ENCODE measurements at regions of chr7 and their contacts with region 1.

Region 1: DNA sequence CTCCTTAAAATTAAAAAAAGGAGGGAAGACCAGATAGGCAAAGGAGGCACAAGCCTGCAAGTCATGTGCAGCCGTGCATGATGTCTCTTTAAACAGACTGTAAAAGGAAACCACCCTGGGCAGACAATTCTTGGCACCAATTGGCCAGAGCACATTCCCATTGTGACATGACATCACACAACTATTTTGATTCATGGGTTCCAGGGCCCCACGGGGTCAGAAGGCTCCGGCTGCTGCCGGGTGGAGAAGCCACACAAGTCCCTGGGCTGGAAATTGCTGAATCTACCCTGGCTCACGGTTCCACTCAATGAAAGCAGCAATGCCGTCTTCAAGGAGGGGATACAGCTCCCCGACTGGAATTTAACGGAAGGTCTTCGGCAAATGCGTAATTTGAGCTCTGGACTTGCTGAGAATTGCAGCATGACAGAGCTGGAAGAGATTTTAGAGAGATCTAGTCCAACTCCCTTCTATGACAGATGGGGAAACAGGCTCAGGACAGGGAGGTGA is 140.5 kb downstream of the PRKAG2 start:
- DNase-seq: peak; percentile 79 to 85
- H3K4me3 ChIP-seq: peak overlapping the region in 2 of 3 donors; percentile 9 to 49
- H3K27ac ChIP-seq: peak overlapping the region; percentile 30 to 46
- H3K4me1 ChIP-seq: no peaks in the 10 kb centered on the region
- H3K27me3 ChIP-seq: no peaks in the 10 kb centered on the region
- CTCF ChIP-seq: peak in 1 of 3 donors; percentile 27
- POLR2A ChIP-seq: no peak

Region 2: DNA sequence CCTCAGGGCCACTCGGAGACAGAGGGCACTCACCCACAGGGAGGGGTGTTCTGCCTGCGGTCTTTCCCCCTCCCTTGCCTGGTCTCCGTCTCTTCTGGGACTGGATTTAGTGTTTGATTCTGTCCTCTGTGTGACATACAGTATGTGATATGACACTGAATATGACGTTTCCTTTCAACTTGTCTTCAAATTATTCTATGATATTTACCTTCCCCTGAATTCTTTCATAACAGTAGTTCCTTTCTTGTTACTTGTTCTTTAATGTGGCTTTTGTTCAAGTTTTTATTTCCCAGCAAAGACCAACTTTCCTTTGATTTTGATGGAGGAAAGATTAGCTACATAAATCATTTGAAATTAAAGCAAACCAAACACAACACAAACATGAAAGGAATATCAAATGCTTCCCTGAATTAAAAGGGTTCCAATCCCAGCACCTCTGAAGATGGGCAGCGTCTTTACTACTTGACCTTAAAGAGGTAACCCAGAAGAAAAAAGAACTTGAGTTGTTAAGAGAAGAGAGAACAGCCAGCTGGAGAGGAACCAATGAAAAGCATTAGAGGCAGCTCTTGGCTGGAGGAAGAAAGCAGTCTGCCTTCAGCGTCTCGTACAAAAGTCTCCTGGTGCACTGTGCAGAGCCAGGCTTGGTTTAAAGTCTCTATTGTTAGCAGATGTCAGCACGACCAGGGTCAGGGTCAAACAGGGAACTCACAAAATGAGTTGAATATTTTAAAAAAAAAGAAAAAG is 198.5 kb before region 1 on chr7:
- intact Hi-C with region 1: no loop called
- DNase-seq: peak in 1 of 2 donors; percentile 41
- H3K4me3 ChIP-seq: no peak overlapping the region
- H3K27ac ChIP-seq: peak overlapping the region; percentile 54 to 70
- H3K4me1 ChIP-seq: no peaks in the 10 kb centered on the region
- H3K27me3 ChIP-seq: no peaks in the 10 kb centered on the region
- CTCF ChIP-seq: no peak
- POLR2A ChIP-seq: no peak

Region 3: DNA sequence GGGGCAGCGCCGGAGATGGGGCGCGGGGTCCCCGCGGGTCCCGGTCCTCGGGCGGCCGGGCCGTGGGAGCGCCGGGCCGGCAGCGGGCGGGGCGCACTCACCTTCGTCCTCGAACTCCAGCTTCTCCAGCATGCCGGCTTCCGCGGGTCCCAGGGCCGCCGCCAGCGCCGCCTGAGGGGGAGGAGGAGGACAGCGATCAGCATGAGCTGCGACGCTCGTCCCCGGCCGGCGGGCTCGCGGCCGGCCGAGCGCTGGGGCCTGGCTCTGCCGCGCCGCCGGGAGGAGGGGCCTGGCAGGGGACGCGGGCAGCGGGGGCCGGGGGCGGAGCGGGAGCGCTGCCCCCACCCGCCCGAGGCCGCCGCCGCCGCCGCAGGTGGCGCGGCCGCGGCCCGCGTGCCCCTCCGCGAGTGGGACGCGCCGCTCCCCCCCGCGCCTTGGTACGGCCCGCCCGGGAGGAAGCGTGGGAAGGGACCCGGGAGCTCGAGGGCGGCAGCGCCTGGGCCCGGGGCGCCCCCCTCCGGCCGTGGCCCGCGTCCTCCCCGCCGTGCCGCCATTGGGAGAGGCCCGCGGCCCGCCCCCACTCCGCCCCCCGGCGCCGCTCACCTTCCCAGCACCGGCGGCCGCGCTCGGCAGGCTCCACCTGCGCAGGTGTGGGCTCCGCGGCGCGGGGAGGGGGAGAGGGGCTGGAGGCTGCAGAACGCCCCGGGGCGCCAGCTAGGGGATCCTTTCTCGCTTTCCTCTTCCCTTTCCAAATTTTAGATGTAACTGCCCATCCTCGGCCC is 104.3 kb before region 1 on chr7:
- intact Hi-C with region 1: loop called (anchors 10 kb)
- DNase-seq: peak; percentile 74 to 75
- H3K4me3 ChIP-seq: peak overlapping the region; percentile 55 to 91 (median 67)
- H3K27ac ChIP-seq: peak overlapping the region; percentile 93 to 98
- H3K4me1 ChIP-seq: peaks cover 0 to 8% of the 10 kb centered on the region in 2 donors
- H3K27me3 ChIP-seq: no peaks in the 10 kb centered on the region
- CTCF ChIP-seq: no peak
- POLR2A ChIP-seq: no peak

Measured in breast epithelium (tissue), 4 donors.